BJ (cell line): ENCODE measurements at regions of chr18 and their contacts with region 1.

Region 1: DNA sequence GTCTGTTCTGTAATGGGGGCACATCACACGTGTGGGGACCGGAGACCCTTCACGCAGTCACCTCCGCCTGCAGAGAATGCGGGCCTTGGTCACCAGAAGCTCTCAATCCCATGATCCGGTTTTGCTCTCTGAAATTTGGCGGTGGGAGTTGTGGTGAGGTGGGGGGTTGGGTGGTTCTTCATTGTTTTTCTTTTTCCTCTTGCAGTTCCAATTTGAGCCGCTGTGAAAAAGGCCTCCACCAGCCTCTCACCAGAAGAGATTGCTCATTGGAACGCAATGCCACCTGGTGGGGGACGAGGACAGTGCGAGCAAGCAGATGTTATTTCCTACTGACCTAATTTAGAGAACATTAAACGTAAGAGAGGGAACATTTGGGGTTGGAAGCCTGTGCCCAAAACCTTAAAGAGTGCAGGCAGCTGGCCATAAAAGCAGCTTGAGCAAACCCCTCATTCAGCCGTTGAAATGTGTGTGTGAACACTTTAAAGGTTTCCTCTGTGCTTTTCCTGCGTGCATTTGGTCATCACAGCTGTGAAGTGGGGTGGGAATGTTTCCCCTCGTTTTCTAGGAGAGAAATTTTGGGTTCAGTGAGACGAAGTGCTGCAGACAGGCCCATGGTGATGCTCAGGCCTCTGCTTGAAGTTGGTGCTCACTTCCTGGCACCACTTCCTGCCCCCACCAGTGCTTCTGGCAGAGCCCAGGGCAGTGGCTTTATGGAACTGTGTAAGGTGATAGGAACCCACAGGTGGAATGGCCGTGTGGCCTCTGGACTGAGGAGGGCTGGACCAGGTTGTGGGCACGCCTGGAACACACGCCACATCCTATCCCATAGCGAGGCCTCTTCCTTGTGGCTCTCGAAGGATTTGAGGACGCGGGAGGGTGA is 61.7 kb downstream of the ZCCHC2 start:
- DNase-seq: peak; percentile 13
- H3K4me3 ChIP-seq: no peak overlapping the region
- H3K27me3 ChIP-seq: no peaks in the 10 kb centered on the region
- CTCF ChIP-seq: peak; percentile 98

Region 2: DNA sequence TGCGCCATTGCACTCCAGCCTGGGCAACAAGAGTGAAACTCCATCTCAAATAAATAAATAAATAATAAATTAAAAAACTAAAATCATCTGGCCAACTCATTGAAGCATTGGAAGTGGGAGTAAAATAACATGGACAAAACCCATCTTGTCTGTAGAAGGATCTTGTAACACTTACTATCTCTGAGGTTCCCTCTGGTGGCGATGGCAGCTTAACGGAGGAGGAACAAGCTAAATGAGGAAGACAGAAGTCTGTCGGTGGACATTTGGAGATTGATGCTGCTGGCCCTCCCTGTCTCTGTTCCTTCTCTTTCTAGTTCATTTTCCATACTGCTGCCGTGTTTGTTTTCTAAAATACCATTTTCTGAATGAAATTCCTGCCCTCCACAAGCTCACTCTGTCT is 18.3 kb before region 1 on chr18:
- CTCF ChIA-PET with region 1: interaction called, 59 read pairs
- POLR2A ChIA-PET with region 1: no interaction called
- DNase-seq: no peak
- H3K4me3 ChIP-seq: no peak overlapping the region
- H3K27me3 ChIP-seq: no peaks in the 10 kb centered on the region
- CTCF ChIP-seq: peak; percentile 17; the same call in 1 of the 2 replicates

Region 3: DNA sequence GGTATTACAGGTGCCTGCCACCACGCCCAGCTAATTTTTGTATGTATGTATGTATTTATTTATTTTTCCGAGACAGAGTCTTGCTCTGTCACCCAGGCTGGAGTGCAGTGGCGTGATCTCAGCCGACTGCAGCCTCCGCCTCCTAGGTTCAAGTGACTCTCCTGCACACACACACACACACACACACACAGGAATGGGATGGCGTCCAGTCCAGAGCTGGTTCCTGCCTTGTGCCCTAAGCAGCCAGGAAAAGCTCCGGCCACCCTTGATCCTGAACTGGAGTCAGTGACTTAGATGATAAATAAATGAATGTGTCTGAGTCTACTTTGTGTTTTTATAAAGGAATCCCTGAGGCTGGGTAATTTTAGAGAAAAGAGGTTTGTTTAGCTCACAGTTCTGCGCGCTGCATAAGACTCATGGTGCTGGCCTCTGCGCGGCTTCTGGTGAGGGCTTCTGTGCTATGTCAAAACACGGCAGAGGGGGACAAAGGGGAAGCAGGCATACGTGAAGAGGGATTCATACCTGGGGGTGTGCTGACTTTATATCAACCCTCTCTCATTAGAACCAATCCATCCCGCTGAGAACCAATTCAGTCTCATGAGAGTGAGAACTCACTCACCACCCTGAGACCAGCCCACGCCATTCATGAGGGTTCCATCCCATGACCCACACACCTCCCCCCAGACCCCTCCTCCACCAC is 71.2 kb after region 1 on chr18:
- CTCF ChIA-PET with region 1: no interaction called
- POLR2A ChIA-PET with region 1: no interaction called
- DNase-seq: no peak
- H3K4me3 ChIP-seq: no peak overlapping the region
- H3K27me3 ChIP-seq: peaks cover 2% of the 10 kb centered on the region
- CTCF ChIP-seq: no peak

Region 4: GRCh38 chr18:62702253-62702652 is 117.8 kb after region 1 on chr18:
- CTCF ChIA-PET with region 1: interaction called, 11 read pairs
- POLR2A ChIA-PET with region 1: no interaction called
- DNase-seq: no peak
- H3K4me3 ChIP-seq: no peak overlapping the region
- H3K27me3 ChIP-seq: peaks cover 2% of the 10 kb centered on the region; the same call in 1 of the 2 replicates
- CTCF ChIP-seq: no peak

Region 5: DNA sequence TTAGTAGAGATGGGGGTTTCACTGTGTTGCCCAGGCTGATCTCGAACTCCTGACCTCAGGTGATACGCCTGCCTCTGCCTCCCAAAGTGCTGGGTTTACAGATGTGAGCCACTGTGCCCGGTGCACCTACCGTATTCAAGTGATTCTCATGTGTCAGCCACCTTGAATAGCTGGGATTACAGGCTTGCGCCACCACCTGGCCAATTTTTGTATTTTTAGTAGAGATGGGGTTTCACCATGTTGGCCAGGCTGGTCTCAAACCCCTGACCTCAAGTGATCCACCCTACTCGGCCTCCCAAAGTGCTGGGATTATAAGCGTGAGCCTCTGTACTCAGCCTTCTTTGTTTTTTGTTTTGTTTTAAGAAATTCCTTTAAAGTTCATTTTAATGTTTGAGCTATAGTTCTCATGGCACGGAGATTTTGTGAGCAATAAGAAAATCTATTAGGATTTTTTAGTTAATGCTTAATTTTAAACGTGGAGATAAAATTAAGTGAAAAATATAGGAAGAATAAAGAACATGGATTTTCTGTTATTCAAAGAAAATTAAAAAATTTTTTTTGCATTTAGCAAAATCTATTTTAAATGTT is 373.5 kb after region 1 on chr18:
- CTCF ChIA-PET with region 1: interaction called, 36 read pairs
- POLR2A ChIA-PET with region 1: no interaction called
- DNase-seq: no peak
- H3K4me3 ChIP-seq: no peak overlapping the region
- H3K27me3 ChIP-seq: no peaks in the 10 kb centered on the region
- CTCF ChIP-seq: peak; percentile 50